Activated T-helper 1 cell treated with anti-CD3 and anti-CD28 coated beads, Interleukin-12 subunit alpha, Interleukin-12 subunit beta, Interleukin-2, Interleukin-4 antibody, amounts not matched to agents 30 ng/mL and 10 ng/mL and 1 ng/mL, durations not matched to agents 14 hours and 24 hours and 36 hours (primary cell): ENCODE measurements at regions of chr15 and their contacts with region 1.

Region 1: DNA sequence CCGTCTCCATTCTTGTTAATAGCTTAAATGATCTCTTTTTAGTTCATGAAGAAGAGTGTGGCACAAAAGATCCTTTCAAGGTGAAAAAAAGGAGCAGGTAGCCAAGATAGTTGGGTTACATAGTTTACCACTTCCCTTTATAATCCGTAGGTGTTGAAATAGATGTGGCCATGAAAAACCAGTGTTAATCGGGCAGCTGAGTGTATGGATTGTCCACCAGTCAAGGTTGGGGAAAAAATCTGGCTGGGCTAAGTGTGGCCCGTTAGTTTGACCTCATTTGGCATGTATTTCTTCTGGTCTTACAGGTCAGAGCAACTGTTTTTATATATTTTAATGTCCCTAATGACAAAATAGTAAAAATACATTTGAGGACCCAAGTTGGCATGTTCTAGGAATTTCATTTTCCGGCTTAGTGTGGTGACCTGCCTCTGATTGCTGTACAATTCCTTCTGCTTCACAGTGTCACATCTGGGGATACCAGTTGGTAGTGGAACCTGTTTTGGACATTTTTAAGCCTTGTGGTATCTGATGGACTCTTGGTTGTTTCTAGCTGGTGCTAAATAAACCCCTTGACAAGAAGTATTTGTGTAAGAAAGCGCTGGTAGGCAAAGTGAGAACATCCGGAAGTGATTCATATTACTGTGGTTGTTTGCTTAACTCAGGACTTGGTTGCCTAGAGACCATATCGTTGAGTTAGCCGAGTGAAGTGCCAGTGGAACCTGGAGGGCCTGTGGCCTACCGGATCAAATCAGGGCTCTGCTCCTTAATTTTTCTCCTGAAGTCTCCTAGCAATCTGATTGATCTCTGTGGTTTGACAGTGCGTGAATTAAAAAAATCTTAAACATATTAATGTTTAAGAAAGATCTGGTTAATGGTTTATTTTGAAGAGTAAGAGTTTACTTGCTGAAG is 12.6 kb downstream of the IQGAP1 start:
- DNase-seq: peak; percentile 69
- H3K4me3 Mint-ChIP-seq: peak overlapping the region; percentile 64
- H3K27ac Mint-ChIP-seq: peak overlapping the region; percentile 94
- H3K4me1 Mint-ChIP-seq: peaks cover 58% of the 10 kb centered on the region
- H3K27me3 Mint-ChIP-seq: no peaks in the 10 kb centered on the region

Region 2: GRCh38 chr15:90031231-90031791 is 369.3 kb before region 1 on chr15:
- intact Hi-C with region 1: loop called (anchors 10 kb)
- DNase-seq: no peak
- H3K4me3 Mint-ChIP-seq: peak overlapping the region; percentile 30
- H3K27ac Mint-ChIP-seq: peak overlapping the region; percentile 44
- H3K4me1 Mint-ChIP-seq: peaks cover 56% of the 10 kb centered on the region
- H3K27me3 Mint-ChIP-seq: no peaks in the 10 kb centered on the region

Region 3: DNA sequence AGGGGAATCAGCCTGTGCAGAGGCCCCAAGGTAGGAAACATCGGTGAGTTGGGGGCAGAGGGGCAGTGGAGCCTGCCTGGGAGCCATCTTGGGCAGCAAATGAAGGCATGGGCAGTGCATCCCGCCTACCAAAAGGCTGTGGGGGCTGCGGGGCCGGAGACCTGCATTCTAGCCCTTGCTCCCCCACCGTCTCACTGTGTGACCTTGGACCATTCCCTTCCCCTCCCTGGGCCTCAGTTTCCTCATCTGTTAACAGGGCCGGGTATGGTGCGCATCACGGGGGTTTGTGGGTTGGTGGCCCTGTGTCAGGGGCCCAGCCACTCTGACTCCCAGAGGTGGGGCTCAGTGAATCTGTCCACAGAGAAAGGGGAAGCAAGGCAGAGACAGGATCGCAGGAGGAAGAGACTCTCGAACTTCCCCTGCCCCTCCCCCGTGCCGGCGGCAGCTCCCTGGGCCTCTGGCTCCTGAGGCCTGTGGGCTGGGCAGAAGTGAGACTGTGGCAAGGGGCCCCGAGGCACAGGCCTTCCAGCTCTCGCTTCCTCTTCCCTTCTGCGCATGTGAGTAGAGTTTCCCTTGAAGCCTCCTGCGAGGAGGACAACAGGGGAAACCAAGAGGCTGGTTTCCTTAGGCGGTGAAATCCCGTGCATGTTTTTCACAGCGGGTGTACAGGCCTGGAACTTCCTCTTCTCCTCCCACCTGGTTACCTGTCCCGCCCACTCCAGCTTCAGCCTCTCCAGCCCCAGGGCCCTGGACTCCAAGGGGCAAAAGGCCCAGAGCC is 341.3 kb before region 1 on chr15:
- intact Hi-C with region 1: no loop called
- DNase-seq: peak; percentile 69
- H3K4me3 Mint-ChIP-seq: peak overlapping the region; percentile 35
- H3K27ac Mint-ChIP-seq: peak overlapping the region; percentile 85
- H3K4me1 Mint-ChIP-seq: peaks cover 25% of the 10 kb centered on the region
- H3K27me3 Mint-ChIP-seq: no peaks in the 10 kb centered on the region

Region 4: GRCh38 chr15:90352109-90352893 is 48.4 kb before region 1 on chr15 and contains the start of gene ZNF774:
- intact Hi-C with region 1: loop called (anchors 1 kb)
- DNase-seq: peak; percentile 88
- H3K4me3 Mint-ChIP-seq: peak within 1 kb of the TSS; percentile 90
- H3K27ac Mint-ChIP-seq: peak within 1 kb of the TSS; percentile 85
- H3K4me1 Mint-ChIP-seq: peaks cover 10% of the 10 kb centered on the region
- H3K27me3 Mint-ChIP-seq: no peaks in the 10 kb centered on the region
- total RNA-seq, gene ZNF774: 1.6 and 2.1 TPM in 2 replicates

Region 5: DNA sequence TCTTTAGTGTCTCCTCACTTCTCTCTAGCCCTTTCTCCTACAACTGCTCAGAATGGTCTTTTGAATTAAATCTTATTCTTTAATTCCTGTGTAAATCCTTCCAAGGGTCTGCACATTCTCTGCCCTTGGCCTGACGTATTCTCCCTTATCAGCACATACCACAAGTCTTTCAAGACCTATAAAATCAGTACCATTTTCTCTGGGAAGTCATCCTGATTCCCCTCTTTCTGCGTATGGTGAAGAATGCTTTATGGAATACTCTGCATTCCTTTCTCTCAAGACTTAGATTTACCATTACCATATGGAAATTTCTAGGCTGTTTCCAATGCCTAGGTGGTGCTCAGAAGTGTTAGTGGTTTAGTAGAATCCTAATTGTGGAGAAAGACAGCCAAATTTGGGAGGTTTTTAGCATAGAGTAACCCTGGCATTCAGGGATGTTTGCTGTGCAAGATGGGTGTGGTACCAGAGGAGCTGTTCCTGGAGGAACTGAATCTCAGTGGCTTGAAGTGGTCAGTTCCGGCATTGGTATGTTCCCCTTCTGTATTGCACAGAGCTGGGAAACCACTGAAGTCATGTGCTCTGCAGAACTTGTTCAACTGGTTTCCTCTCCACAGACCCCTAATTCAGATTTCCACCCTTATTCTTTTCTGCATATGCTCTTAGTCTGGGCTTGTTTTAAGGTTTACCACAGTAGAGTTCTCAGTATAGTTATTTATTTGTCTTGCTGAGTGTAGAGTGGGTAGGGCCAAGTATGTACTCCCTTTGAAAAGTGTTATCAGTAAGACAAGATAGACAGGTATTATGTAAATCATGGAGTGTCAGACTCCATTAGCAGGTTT is 11.9 kb after region 1 on chr15:
- intact Hi-C with region 1: loop called (anchors 1 kb)
- DNase-seq: no peak
- H3K4me3 Mint-ChIP-seq: peak overlapping the region; percentile 13
- H3K27ac Mint-ChIP-seq: peak overlapping the region; percentile 74
- H3K4me1 Mint-ChIP-seq: peaks cover 79% of the 10 kb centered on the region
- H3K27me3 Mint-ChIP-seq: no peaks in the 10 kb centered on the region